ENCODE measurements at regions of chr3 and their contacts with region 1.

Region 1: DNA sequence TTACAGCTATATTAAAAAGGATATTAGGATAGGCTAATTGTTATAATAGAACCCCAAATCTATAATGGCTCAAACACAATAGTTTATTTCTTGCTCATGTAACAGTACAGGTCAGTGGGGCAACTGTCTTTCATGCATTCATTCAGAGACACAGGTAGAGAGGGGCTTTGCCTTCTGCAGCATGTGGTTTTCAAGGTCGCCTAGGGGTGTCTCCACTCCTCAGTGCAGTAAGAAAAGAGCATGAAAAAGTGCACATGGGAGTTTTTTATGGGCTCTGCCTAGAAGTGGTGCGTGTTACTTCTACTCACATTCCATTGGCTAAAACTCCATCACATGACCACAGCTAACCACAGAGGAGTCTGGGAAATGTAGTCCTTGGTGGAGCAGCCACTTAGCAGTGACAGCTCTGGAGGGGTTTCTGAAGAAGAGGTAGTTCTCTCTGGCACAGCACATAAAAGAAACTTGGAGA is 1.8 kb downstream of the ZBTB38 start:
- DNase-seq: peak; percentile 45 to 68
- ATAC-seq: peak; percentile 71 to 80
- H3K4me3 ChIP-seq: peak overlapping the region; percentile 8 to 48 (median 44)
- H3K27ac ChIP-seq: peak overlapping the region; percentile 88 to 96 (median 94)
- H3K4me1 ChIP-seq: peaks cover 27 to 55% of the 10 kb centered on the region in 2 donors
- H3K27me3 ChIP-seq: no peaks in the 10 kb centered on the region
- CTCF ChIP-seq: peak in 2 of 5 experiments; percentile 21 to 30
- POLR2A ChIP-seq: peak; percentile 50 to 65

Region 2: GRCh38 chr3:141237701-141238521 is 132.2 kb before region 1 on chr3:
- in situ Hi-C with region 1: no loop called
- intact Hi-C with region 1: loop called (anchors 5 kb)
- DNase-seq: peak; percentile 67 to 90
- ATAC-seq: peak; percentile 73 to 81
- H3K4me3 ChIP-seq: peak overlapping the region in 2 of 4 donors; percentile 5 to 28
- H3K27ac ChIP-seq: peak overlapping the region; percentile 87 to 96 (median 92)
- H3K4me1 ChIP-seq: peaks cover 44 to 59% of the 10 kb centered on the region in 2 donors
- H3K27me3 ChIP-seq: no peaks in the 10 kb centered on the region
- CTCF ChIP-seq: no peak
- POLR2A ChIP-seq: peak in 1 of 2 donors; percentile 38

Region 3: GRCh38 chr3:141328286-141329166 is 41.6 kb before region 1 on chr3:
- in situ Hi-C with region 1: no loop called
- intact Hi-C with region 1: no loop called
- DNase-seq: no peak
- ATAC-seq: no peak
- H3K4me3 ChIP-seq: no peak overlapping the region
- H3K27ac ChIP-seq: no peak overlapping the region
- H3K4me1 ChIP-seq: no peaks in the 10 kb centered on the region
- H3K27me3 ChIP-seq: no peaks in the 10 kb centered on the region
- CTCF ChIP-seq: no peak
- POLR2A ChIP-seq: no peak

Region 4: GRCh38 chr3:141412087-141412935 is 42.2 kb after region 1 on chr3:
- in situ Hi-C with region 1: no loop called
- intact Hi-C with region 1: loop called (anchors 1 kb)
- DNase-seq: peak; percentile 70 to 76
- ATAC-seq: peak; percentile 74 to 79
- H3K4me3 ChIP-seq: peak overlapping the region; percentile 41 to 56 (median 49)
- H3K27ac ChIP-seq: peak overlapping the region; percentile 92 to 99 (median 96)
- H3K4me1 ChIP-seq: peaks cover 66 to 69% of the 10 kb centered on the region in 2 donors
- H3K27me3 ChIP-seq: no peaks in the 10 kb centered on the region
- CTCF ChIP-seq: no peak
- POLR2A ChIP-seq: peak; percentile 64 to 65

Region 5: GRCh38 chr3:141431411-141432378 is 61.6 kb after region 1 on chr3:
- in situ Hi-C with region 1: no loop called
- intact Hi-C with region 1: loop called (anchors 1 kb)
- DNase-seq: peak; percentile 77 to 82
- ATAC-seq: peak; percentile 74 to 75
- H3K4me3 ChIP-seq: peak overlapping the region; percentile 43 to 65 (median 57)
- H3K27ac ChIP-seq: peak overlapping the region; percentile 82 to 96 (median 95)
- H3K4me1 ChIP-seq: peaks cover 49 to 67% of the 10 kb centered on the region in 2 donors
- H3K27me3 ChIP-seq: no peaks in the 10 kb centered on the region
- CTCF ChIP-seq: no peak
- POLR2A ChIP-seq: peak; percentile 72 to 76